ENCODE measurements at regions of chr20 and their contacts with region 1.

Region 1: GRCh38 chr20:37295001-37295400 is 5.5 kb downstream of the MANBAL start:
- DNase-seq: no peak
- ATAC-seq: peak; percentile 26
- H3K4me3 ChIP-seq: no peak overlapping the region; the same call in 1 of the 2 replicates
- H3K27ac ChIP-seq: peak overlapping the region; percentile 66
- H3K4me1 ChIP-seq: peaks cover 63% of the 10 kb centered on the region
- H3K27me3 ChIP-seq: no peaks in the 10 kb centered on the region
- CTCF ChIP-seq: no peak
- EP300 ChIP-seq: no peak
- POLR2A ChIP-seq: no peak
- RAD21 ChIP-seq: no peak

Region 2: DNA sequence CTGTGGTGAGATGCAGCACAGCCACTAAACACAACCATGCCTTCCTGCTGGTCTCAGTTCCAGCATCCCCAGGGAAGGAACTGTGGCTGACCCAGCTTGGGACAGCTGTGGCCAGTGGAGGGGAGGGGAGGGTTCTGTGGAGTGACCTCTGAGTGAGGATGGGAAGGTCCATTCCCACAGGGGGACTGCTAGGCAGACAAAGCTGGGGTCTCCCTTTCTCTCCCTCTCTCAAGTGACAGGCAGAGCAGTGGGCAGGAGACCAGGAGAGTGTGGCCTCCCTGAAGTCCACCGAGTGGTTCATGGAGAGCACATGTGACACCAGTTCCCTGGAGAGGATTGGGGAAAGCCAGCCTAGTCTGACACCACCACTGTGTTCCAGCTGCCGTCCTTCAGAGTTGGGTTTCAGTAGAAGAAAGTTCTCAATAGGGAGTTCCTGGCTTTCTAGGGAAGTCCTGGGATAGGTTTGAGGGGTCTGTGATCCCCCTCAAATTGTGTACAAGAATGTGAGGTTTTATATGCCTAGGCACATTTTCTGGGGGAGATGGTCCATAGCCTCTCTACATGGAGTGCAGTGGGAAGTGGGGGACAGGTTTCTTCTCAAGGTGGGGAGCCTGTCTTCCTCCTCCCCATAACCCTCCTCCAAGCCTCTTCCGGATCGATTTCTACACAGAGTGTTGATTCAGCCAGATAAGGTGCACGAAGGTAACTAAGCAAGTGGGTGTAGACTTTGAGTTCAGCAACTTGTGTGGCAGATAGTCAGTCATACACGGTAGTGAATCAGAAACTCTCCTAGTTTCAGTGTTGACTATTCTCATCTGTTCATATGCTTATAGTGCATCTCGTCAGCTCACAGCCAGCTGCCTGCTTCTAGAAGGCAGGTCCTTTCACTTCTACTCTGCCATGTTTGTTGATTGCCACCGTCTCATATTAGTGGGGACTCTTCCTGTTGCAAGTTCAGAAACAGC is 13.4 kb after region 1 on chr20:
- CTCF ChIA-PET with region 1: interaction called, 5 read pairs
- POLR2A ChIA-PET with region 1: interaction called, 3 read pairs
- RAD21 ChIA-PET with region 1: interaction called, 3 read pairs
- SMC1A ChIA-PET with region 1: interaction called, 9 read pairs
- in situ Hi-C with region 1: no loop called
- intact Hi-C with region 1: loop called (anchors 1 kb)
- DNase-seq: peak; percentile 84
- ATAC-seq: peak; percentile 98
- H3K4me3 ChIP-seq: no peak overlapping the region
- H3K27ac ChIP-seq: peak overlapping the region; percentile 93
- H3K4me1 ChIP-seq: peaks cover 36% of the 10 kb centered on the region
- H3K27me3 ChIP-seq: no peaks in the 10 kb centered on the region
- CTCF ChIP-seq: no peak
- EP300 ChIP-seq: no peak
- POLR2A ChIP-seq: 0 out of 2 replicates have a peak, but pooled peaks have one; percentile 35
- RAD21 ChIP-seq: no peak

Region 3: GRCh38 chr20:37316116-37316774 is 21.2 kb after region 1 on chr20:
- CTCF ChIA-PET with region 1: interaction called, 5 read pairs
- POLR2A ChIA-PET with region 1: interaction called, 4 read pairs
- RAD21 ChIA-PET with region 1: interaction called, 3 read pairs
- SMC1A ChIA-PET with region 1: interaction called, 12 read pairs
- in situ Hi-C with region 1: no loop called
- intact Hi-C with region 1: no loop called
- DNase-seq: no peak
- ATAC-seq: peak; percentile 91
- H3K4me3 ChIP-seq: no peak overlapping the region
- H3K27ac ChIP-seq: peak overlapping the region; percentile 93
- H3K4me1 ChIP-seq: peaks cover 33% of the 10 kb centered on the region
- H3K27me3 ChIP-seq: no peaks in the 10 kb centered on the region
- CTCF ChIP-seq: no peak
- EP300 ChIP-seq: 0 out of 4 replicates have a peak, but pooled peaks of 1 of the 2 experiments have one; percentile 22
- POLR2A ChIP-seq: no peak; the same call in 1 of the 2 replicates
- RAD21 ChIP-seq: no peak

Region 4: DNA sequence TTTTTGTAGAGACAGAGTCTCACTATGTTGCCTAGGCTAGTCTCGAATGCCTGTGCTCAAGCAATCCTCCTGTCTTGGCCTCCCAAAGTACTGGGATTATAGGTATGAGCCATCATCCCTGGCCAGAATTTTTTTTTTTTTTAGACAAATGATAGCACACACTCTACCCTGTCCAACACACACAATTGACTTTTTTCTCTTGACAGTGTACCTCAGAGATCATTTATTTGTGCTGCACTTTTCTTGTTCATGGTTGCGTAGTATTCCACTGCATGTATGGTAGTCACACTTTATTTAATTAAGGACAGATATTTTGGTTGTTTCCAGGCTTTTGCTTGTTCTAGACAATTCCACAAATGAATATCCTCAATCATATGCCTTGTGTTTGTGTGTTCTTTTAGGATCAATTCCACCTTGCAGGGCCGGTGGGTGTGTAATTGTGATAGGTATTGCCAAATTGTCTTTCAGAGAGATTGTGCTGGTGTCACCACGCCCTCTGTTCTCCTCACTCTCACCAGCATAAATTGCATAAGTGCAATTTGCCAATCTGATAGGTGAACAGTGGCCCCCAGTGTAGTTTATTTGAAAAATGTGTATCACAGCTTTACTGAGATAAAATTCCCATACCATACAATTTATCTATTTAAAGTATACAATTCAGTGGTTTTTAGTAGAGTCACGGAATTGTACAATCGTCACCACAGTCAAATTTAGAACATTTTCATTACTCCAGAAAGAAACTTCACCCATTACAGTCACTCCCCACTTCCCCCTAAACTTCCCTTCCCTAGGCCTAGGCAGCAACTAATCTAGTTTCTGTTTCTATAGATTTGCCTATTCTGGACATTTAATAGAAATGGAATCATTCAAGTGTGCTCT is 71.0 kb after region 1 on chr20:
- CTCF ChIA-PET with region 1: interaction called, 3 read pairs
- POLR2A ChIA-PET with region 1: interaction called, 11 read pairs
- RAD21 ChIA-PET with region 1: no interaction called
- SMC1A ChIA-PET with region 1: no interaction called
- in situ Hi-C with region 1: no loop called
- intact Hi-C with region 1: loop called (anchors 5 kb)
- DNase-seq: peak; percentile 90
- ATAC-seq: peak; percentile 86
- H3K4me3 ChIP-seq: peak overlapping the region; percentile 2; the same call in 1 of the 2 replicates
- H3K27ac ChIP-seq: peak overlapping the region; percentile 87
- H3K4me1 ChIP-seq: peaks cover 74% of the 10 kb centered on the region
- H3K27me3 ChIP-seq: no peaks in the 10 kb centered on the region
- CTCF ChIP-seq: peak in 1 of 3 experiments; percentile 2; a peak in 1 of 6 replicates
- EP300 ChIP-seq: peak; percentile 77 to 79; a peak in 3 of 4 replicates
- POLR2A ChIP-seq: no peak
- RAD21 ChIP-seq: peak; percentile 57

Measured in GM12878 (cell line).